ENCODE measurements at regions of chrX and their contacts with region 1.

Region 1: DNA sequence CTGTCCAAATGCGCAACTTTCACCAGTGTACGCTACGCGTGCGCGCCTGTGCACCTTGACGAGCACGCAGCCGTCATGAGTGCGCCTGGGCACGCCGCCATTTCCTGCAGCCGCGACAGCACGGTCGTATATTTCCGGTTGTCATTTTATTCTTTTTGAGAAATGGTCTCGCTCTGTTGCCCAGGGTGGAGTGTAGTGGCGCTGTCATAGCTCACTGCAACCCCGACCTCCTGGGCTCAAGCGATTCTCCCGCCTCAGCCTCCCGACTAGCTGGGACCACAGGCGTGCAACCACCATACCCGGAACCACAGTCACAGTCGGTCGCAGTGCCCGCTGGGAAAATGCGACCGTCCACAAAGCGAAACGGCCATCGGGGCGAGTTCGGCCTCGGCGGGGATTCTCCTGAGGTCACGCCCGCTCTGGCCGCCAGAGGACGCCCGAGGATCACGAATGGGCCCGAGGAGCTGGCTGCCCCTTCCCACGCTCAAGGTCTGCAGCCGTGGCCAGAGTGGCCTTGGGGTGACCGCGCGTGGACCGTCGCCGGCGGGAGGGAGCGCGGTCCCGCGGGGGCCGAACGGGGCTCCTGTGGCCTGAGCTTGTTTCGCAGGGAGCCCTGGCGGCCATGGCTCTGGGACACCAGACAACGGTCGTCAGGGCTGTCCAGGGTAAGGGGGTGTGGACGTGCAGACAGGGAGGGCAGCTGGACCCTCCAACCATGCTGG is 23.7 kb upstream of the PNMA3 start:
- DNase-seq: peak; percentile 78
- ATAC-seq: peak; percentile 85
- H3K4me3 Mint-ChIP-seq: peak overlapping the region; percentile 76
- H3K27ac Mint-ChIP-seq: peak overlapping the region; percentile 84
- H3K4me1 Mint-ChIP-seq: peaks cover 2% of the 10 kb centered on the region
- H3K27me3 Mint-ChIP-seq: no peaks in the 10 kb centered on the region

Region 2: DNA sequence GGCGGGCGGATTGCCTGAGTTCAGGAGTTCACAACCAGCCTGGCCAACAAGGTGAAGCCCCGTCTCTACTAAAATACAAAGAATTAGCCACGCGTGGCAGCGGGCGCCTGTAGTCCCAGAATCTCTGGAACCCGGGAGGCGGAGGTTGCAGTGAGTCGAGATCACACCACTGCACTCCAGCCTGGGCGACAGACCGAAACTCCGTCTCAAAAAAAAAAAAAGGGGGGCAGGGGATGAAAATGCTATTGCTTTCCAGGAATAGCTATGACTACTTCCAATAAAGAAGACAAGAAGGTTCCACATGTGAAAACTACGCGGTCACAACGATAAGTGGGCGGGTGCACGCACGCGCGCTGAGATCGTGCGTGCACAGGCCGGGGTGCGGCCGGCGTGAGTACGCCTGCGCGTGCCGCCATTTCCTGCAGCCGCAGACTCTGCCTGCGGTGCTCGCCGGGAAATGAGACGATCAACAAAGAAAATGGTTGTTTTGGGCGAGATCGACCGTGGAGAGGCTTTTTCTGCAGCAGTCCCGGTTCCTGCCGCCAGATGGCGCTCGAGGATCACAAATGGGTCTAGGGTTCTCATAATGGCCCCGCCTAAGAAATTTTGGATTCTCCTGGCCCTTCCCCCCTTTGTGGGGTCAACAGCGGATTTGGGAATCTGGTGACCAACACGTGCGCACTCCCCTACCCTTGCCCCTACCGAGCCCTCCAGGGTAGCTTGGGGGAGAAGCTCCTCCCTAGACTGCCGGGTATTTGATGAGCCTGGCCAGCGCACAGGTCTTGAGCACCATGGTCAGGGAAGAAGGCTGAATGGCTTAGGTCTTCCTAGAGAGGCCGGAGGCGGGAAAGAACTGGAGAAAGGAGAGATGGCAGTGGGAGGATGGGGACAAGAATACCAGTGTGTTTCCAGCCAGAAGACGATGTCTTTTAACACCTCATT is 73.8 kb before region 1 on chrX:
- CTCF ChIA-PET with region 1: interaction called, 4 read pairs
- POLR2A ChIA-PET with region 1: no interaction called
- intact Hi-C with region 1: loop called (anchors 1 to 2 kb)
- DNase-seq: peak; percentile 91
- ATAC-seq: peak; percentile 98
- H3K4me3 Mint-ChIP-seq: peak overlapping the region; percentile 52
- H3K27ac Mint-ChIP-seq: peak overlapping the region; percentile 91
- H3K4me1 Mint-ChIP-seq: peaks cover 6% of the 10 kb centered on the region
- H3K27me3 Mint-ChIP-seq: no peaks in the 10 kb centered on the region

Region 3: GRCh38 chrX:153400146-153401127 is 367.9 kb after region 1 on chrX:
- CTCF ChIA-PET with region 1: no interaction called
- POLR2A ChIA-PET with region 1: no interaction called
- intact Hi-C with region 1: loop called in 1 of 2 experiments (anchors 1 kb)
- DNase-seq: peak; percentile 81
- ATAC-seq: peak; percentile 86
- H3K4me3 Mint-ChIP-seq: no peak overlapping the region
- H3K27ac Mint-ChIP-seq: no peak overlapping the region
- H3K4me1 Mint-ChIP-seq: no peaks in the 10 kb centered on the region
- H3K27me3 Mint-ChIP-seq: no peaks in the 10 kb centered on the region